ENCODE measurements at regions of chr7 and their contacts with region 1.

Region 1: DNA sequence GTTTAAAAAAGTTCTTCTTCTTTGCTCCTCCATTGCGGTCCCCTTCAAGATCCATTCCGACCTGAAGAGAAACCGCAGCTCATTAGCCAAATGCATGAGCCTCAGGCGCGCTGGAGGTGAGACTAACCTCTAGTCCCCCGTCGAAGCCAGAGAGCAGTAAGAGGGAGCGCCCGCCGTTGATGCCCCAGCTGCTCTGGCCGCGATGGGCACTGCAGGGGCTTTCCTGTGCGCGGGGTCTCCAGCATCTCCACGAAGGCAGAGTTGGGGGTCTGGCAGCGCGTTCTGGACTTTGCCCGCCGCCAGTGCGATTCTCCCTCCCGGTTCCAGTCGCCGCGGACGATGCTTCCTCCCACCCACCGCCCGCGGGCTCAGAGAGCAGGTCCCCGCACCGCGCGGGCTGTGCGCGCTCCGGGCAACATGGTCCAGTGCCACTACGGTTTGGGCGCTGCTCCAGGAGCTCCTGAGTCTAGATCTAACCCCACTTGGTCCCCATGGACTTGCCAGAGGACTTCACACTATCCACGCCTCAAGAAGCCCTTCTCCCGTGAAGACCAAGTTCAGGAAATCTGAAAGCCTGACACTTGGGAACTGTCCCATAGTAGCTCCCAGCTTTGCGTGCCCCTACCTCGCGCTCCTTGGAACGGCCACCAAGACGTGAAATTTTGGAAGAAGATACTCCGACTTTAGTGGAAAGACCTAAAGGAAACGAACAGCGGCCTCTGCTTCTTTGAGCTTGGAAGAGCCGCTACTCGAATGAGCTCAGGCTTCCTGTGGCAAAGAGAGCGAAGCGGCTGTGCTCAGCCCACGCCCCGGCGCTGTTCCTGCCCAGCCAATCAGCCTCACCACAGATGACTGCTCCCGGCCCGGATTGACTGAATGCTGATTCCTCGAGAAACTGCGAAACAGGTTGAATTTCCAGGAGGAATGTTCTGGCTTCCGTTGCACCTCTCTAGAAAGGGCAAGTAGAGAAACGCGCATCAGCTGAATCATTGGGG is at the start of gene ABCB1:
- DNase-seq: peak; percentile 21
- H3K4me3 Mint-ChIP-seq: peak within 1 kb of the TSS; percentile 82
- H3K27ac Mint-ChIP-seq: no peak within 1 kb of the TSS
- H3K4me1 Mint-ChIP-seq: peaks cover 15% of the 10 kb centered on the region
- H3K27me3 Mint-ChIP-seq: peaks cover 33% of the 10 kb centered on the region
- CTCF ChIP-seq: no peak
- total RNA-seq, gene ABCB1: 5.7 and 15.8 TPM in 2 replicates

Region 2: GRCh38 chr7:87494454-87494853 is 106.0 kb before region 1 on chr7:
- CTCF ChIA-PET with region 1: interaction called, 11 read pairs
- intact Hi-C with region 1: no loop called
- DNase-seq: no peak
- H3K4me3 Mint-ChIP-seq: no peak overlapping the region
- H3K27ac Mint-ChIP-seq: no peak overlapping the region
- H3K4me1 Mint-ChIP-seq: no peaks in the 10 kb centered on the region
- H3K27me3 Mint-ChIP-seq: peaks cover 12% of the 10 kb centered on the region
- CTCF ChIP-seq: no peak

Region 3: GRCh38 chr7:87747681-87748080 is 147.3 kb after region 1 on chr7:
- CTCF ChIA-PET with region 1: no interaction called
- intact Hi-C with region 1: no loop called
- DNase-seq: no peak
- H3K4me3 Mint-ChIP-seq: no peak overlapping the region
- H3K27ac Mint-ChIP-seq: no peak overlapping the region
- H3K4me1 Mint-ChIP-seq: no peaks in the 10 kb centered on the region
- H3K27me3 Mint-ChIP-seq: no peaks in the 10 kb centered on the region
- CTCF ChIP-seq: no peak

Region 4: GRCh38 chr7:87767797-87768196 is 167.4 kb after region 1 on chr7:
- CTCF ChIA-PET with region 1: no interaction called
- intact Hi-C with region 1: no loop called
- DNase-seq: no peak
- H3K4me3 Mint-ChIP-seq: no peak overlapping the region
- H3K27ac Mint-ChIP-seq: no peak overlapping the region
- H3K4me1 Mint-ChIP-seq: peaks cover 12% of the 10 kb centered on the region
- H3K27me3 Mint-ChIP-seq: no peaks in the 10 kb centered on the region
- CTCF ChIP-seq: no peak

Region 5: GRCh38 chr7:88057655-88058054 is 457.2 kb after region 1 on chr7:
- CTCF ChIA-PET with region 1: no interaction called
- intact Hi-C with region 1: no loop called
- DNase-seq: no peak
- H3K4me3 Mint-ChIP-seq: no peak overlapping the region
- H3K27ac Mint-ChIP-seq: no peak overlapping the region
- H3K4me1 Mint-ChIP-seq: no peaks in the 10 kb centered on the region
- H3K27me3 Mint-ChIP-seq: no peaks in the 10 kb centered on the region
- CTCF ChIP-seq: no peak

Measured in Calu3 (cell line).